ENCODE measurements at regions of chr21 and their contacts with region 1.

Region 1: DNA sequence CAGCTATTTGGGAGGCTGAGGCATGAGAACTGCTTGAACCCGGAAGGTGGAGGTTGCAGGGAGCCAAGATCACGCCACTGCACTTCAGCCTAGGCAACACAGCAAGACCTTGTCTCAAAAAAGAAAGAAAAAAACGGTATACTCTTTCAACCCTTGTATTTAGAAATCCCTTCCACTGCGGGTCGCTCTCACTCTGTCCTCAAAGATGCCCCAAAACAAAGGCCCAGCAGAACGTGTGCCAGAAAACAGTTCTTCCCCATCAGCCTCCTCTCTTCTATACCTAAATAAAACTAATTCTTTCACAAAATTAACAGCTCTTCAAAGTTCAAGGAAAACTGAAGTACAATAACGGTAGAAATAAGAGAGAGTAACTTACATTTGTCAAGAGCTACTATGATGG is 13.2 kb downstream of the SETD4 start:
- DNase-seq: no peak
- H3K4me3 ChIP-seq: no peak overlapping the region
- H3K27ac ChIP-seq: no peak overlapping the region
- H3K4me1 ChIP-seq: no peaks in the 10 kb centered on the region
- H3K27me3 ChIP-seq: no peaks in the 10 kb centered on the region
- CTCF ChIP-seq: no peak
- POLR2A ChIP-seq: no peak

Region 2: DNA sequence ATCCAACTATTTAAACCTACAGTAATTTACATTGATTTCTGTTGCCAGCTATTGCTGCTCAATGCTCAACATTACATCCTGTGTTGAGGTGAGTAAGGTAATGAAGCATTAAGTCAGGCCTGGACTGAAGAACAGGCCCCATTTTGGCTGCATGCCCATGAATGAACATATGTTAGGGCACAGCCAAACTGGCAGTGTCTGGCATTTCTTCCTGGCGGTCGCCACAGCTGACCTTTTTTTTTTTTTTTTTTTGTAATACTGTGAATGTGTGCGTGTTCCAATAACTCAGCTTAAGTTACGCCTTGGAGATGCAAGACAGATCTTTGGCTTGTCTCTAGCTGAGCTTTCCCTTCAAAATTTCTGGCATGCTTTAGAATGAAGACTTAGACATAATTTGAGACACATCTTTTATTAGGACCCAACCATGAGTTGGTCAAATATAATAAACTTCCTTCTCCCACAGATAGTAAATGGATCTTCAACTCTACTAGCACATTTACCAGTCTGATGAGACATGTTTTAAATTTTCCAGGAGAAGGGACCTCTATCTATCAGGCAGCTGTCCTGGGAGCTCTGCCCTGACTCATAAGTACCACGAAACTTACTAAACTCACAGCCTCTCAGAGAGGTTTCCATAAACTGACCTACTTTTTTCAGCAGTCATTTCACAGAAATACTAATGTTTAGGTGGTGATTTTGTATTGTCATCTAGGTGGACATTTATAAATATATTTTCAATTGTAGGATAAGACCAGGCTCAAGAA is 656.9 kb before region 1 on chr21:
- intact Hi-C with region 1: no loop called
- DNase-seq: no peak
- H3K4me3 ChIP-seq: no peak overlapping the region
- H3K27ac ChIP-seq: no peak overlapping the region
- H3K4me1 ChIP-seq: no peaks in the 10 kb centered on the region
- H3K27me3 ChIP-seq: no peaks in the 10 kb centered on the region
- CTCF ChIP-seq: no peak
- POLR2A ChIP-seq: no peak

Region 3: DNA sequence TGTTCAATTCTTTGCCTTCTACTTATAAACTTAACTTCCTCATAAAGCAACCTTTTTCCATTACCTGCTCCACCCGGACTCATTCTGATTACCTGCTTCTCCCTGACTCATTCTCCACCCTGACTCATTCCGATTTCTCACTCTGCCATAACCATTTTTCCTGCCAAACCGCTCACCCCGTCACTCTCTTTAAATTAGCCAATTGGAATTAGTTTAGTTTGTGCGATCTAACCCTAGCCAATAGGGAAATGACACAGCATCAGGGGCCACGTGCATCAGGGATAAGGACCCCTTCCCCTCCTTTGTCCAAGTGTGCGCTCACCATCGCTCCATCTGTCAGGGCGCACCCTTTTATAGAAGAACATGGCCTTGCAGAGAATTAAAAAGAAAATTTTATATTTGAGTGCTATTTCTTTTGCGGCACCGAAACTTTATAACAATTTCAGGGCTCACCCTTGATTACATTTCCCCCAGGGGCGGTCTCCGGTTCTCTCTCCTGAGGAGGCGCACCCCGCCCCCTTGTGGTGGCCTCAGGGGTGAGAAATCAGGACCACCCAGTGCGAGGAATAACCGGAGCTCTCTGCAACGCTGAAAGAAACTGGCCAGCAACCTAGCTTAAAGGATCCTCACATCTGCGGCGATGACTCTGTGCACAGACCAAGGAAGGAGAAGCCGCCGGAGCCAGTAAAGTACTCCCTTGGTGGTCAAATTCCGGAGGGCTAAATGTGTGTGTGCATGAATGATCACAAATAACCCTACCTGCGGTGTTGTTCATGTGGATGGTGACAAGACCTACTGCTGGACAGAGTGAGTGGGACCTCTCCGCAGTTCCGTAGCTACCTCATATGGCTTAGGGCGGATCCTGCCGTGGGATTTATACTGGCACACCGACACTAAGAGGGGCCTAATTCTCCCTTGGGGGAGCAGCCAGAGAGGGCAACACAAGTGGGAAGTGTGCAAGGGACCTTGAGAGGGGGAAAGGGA is 57.5 kb after region 1 on chr21:
- intact Hi-C with region 1: loop called in 1 of 2 experiments (anchors 10 kb)
- DNase-seq: peak in 3 of 7 donors; percentile 47 to 52 (median 49)
- H3K4me3 ChIP-seq: peak overlapping the region in 1 of 4 donors; percentile 7
- H3K27ac ChIP-seq: no peak overlapping the region
- H3K4me1 ChIP-seq: no peaks in the 10 kb centered on the region
- H3K27me3 ChIP-seq: peaks cover 5% of the 10 kb centered on the region
- CTCF ChIP-seq: peak; percentile 12 to 48 (median 28)
- POLR2A ChIP-seq: no peak